Naive thymus-derived CD4-positive, alpha-beta T cell (primary cell): ENCODE measurements at regions of chr12 and their contacts with region 1.

Region 1: DNA sequence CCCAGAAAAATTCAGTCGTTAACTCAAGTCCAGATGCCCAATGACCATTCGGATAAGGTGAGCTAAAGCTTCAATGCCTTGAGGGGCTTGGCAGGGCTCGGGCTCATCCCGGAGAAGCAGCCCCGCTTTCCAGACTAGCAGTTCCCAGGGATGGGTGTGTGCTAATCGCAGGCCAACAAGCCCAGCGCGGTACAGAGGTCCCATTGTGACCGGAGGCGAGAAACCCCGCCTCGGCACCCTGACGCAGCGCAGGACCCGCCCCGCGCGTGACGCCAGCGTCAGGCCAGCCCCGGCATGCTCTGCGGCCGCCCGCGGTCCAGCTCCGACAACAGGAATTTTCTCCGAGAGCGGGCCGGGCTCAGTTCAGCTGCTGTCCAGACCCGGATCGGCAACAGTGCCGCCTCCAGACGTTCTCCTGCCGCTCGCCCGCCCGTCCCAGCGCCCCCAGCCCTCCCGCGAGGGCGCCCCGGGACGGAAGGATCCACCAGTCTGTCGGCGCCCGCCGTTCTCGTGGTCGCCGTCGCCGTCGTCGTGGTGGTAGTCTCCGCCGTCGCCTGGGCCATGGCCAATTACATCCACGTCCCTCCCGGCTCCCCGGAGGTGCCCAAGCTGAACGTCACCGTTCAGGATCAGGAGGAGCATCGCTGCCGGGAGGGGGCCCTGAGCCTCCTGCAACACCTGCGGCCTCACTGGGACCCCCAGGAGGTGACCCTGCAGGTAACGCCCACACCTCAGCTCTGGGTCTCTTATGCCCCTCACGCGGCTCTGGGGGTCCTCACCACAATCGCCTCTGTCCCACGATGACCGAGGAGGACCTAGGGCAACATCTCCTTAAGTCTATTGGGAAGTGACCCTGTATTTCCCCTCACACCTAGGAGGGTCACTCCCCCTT is at the start of gene ETNK1:
- DNase-seq: peak; percentile 72 to 88 (median 77)
- ATAC-seq: peak; percentile 99
- H3K4me3 ChIP-seq: peak within 1 kb of the TSS; percentile 80
- H3K4me3 Mint-ChIP-seq: peak within 1 kb of the TSS; percentile 85 to 100 (median 96)
- H3K27ac ChIP-seq: peak within 1 kb of the TSS; percentile 88
- H3K27ac Mint-ChIP-seq: peak within 1 kb of the TSS; percentile 84 to 99 (median 97)
- H3K4me1 ChIP-seq: peaks cover 17 to 20% of the 10 kb centered on the region in 2 donors
- H3K4me1 Mint-ChIP-seq: peaks cover 23 to 50% (median 45%) of the 10 kb centered on the region in 7 donors
- H3K27me3 ChIP-seq: no peaks in the 10 kb centered on the region
- H3K27me3 Mint-ChIP-seq: peaks cover 0 to 25% (median 9%) of the 10 kb centered on the region in 5 donors
- total RNA-seq, gene ETNK1: 43.7 to 88.6 (median 77.9) TPM

Region 2: DNA sequence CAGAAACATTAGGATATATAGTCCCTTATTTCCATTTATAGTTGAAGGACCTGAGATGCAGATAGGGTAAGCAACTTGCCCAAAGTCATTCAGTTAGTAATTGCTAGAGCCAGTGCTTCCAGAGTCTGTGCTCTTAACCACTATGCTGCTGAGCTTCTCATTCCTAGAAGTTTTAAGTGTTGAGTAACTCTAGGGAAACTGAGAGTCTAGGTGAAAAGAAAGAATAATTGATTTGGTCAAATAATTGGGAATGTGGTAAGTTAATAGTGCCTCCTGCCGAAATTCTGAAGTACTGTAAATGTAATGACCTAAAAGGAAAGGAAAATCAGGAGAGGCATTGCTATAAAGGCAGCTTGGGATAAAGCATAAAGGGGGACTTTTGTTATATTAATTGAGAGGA is 1173.6 kb before region 1 on chr12:
- CTCF ChIA-PET with region 1: no interaction called
- POLR2A ChIA-PET with region 1: no interaction called
- intact Hi-C with region 1: loop called in 1 of 2 experiments (anchors 5 kb)
- DNase-seq: no peak
- ATAC-seq: no peak
- H3K4me3 ChIP-seq: no peak overlapping the region
- H3K4me3 Mint-ChIP-seq: no peak overlapping the region
- H3K27ac ChIP-seq: no peak overlapping the region
- H3K27ac Mint-ChIP-seq: peak overlapping the region in 4 of 9 donors; percentile 6 to 51 (median 28)
- H3K4me1 ChIP-seq: peaks cover 2 to 21% of the 10 kb centered on the region in 2 donors
- H3K4me1 Mint-ChIP-seq: peaks cover 2 to 48% (median 29%) of the 10 kb centered on the region in 7 donors
- H3K27me3 ChIP-seq: no peaks in the 10 kb centered on the region
- H3K27me3 Mint-ChIP-seq: no peaks in the 10 kb centered on the region

Region 3: DNA sequence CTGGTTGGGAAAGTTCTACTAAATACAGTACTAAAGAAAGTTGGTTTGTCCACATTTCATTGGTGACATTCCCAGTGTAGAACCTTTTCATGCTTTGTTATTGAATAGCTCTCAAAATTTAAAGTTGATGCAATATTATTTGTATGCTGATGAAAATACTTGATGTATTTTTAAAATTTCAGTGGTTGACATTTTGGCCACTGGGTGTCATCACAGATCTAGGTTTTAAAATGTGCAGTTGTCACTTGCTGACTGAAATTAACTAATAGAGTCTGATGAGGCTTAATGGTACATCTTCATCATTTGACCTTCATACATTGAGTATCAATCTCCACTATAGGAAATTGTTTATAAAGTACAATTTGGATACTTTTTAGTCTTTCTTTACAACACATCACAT is 541.9 kb before region 1 on chr12:
- CTCF ChIA-PET with region 1: no interaction called
- POLR2A ChIA-PET with region 1: no interaction called
- intact Hi-C with region 1: loop called in 1 of 2 experiments (anchors 10 kb)
- DNase-seq: peak in 7 of 9 donors; percentile 18 to 57 (median 47)
- ATAC-seq: peak; percentile 56
- H3K4me3 ChIP-seq: no peak overlapping the region
- H3K4me3 Mint-ChIP-seq: no peak overlapping the region
- H3K27ac ChIP-seq: no peak overlapping the region
- H3K27ac Mint-ChIP-seq: no peak overlapping the region
- H3K4me1 ChIP-seq: no peaks in the 10 kb centered on the region
- H3K4me1 Mint-ChIP-seq: no peaks in the 10 kb centered on the region
- H3K27me3 ChIP-seq: no peaks in the 10 kb centered on the region
- H3K27me3 Mint-ChIP-seq: peaks cover 0 to 9% (median 0%) of the 10 kb centered on the region in 5 donors

Region 4: GRCh38 chr12:22312336-22312735 is 312.8 kb before region 1 on chr12:
- CTCF ChIA-PET with region 1: no interaction called
- POLR2A ChIA-PET with region 1: no interaction called
- intact Hi-C with region 1: no loop called
- DNase-seq: no peak
- ATAC-seq: no peak
- H3K4me3 ChIP-seq: no peak overlapping the region
- H3K4me3 Mint-ChIP-seq: no peak overlapping the region
- H3K27ac ChIP-seq: no peak overlapping the region
- H3K27ac Mint-ChIP-seq: no peak overlapping the region
- H3K4me1 ChIP-seq: no peaks in the 10 kb centered on the region
- H3K4me1 Mint-ChIP-seq: peaks cover 0 to 5% (median 0%) of the 10 kb centered on the region in 7 donors
- H3K27me3 ChIP-seq: no peaks in the 10 kb centered on the region
- H3K27me3 Mint-ChIP-seq: peaks cover 0 to 20% (median 4%) of the 10 kb centered on the region in 5 donors

Region 5: DNA sequence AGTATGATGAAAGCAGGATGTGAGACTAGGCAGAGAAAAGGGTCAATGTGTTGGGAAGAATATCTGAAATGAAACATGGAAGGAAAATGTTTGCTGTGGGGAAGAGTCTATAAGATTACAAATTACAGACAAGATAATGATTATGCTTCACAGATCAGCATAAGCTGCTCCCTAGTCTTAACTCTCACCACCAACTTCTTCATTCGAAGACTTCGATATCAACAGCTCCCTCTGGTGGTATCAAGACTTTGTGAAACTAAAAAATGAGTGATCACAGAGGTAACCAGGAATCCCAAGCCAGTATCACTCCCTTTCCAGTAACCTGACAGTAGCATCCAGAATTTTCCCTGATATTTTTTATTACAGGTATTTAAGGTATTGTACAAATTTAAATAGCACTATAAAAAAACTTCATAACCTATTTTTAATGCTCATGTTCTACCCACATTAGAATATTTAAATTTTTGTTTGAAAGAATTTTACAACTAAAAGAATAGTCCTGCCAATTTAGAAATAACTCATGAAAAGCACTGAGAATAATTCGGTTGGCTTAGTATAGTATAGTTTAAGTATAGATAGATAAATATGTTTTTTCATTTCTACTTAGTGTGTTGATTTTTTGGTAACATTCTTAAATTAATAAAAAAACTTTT is 165.2 kb before region 1 on chr12:
- CTCF ChIA-PET with region 1: interaction called, 4 read pairs
- POLR2A ChIA-PET with region 1: no interaction called
- intact Hi-C with region 1: loop called (anchors 2 to 5 kb)
- DNase-seq: peak in 6 of 9 donors; percentile 22 to 43 (median 34)
- ATAC-seq: peak; percentile 81
- H3K4me3 ChIP-seq: no peak overlapping the region
- H3K4me3 Mint-ChIP-seq: no peak overlapping the region
- H3K27ac ChIP-seq: no peak overlapping the region
- H3K27ac Mint-ChIP-seq: peak overlapping the region in 2 of 9 donors; percentile 4 to 30
- H3K4me1 ChIP-seq: no peaks in the 10 kb centered on the region
- H3K4me1 Mint-ChIP-seq: peaks cover 0 to 3% (median 0%) of the 10 kb centered on the region in 7 donors
- H3K27me3 ChIP-seq: no peaks in the 10 kb centered on the region
- H3K27me3 Mint-ChIP-seq: no peaks in the 10 kb centered on the region

Region 6: DNA sequence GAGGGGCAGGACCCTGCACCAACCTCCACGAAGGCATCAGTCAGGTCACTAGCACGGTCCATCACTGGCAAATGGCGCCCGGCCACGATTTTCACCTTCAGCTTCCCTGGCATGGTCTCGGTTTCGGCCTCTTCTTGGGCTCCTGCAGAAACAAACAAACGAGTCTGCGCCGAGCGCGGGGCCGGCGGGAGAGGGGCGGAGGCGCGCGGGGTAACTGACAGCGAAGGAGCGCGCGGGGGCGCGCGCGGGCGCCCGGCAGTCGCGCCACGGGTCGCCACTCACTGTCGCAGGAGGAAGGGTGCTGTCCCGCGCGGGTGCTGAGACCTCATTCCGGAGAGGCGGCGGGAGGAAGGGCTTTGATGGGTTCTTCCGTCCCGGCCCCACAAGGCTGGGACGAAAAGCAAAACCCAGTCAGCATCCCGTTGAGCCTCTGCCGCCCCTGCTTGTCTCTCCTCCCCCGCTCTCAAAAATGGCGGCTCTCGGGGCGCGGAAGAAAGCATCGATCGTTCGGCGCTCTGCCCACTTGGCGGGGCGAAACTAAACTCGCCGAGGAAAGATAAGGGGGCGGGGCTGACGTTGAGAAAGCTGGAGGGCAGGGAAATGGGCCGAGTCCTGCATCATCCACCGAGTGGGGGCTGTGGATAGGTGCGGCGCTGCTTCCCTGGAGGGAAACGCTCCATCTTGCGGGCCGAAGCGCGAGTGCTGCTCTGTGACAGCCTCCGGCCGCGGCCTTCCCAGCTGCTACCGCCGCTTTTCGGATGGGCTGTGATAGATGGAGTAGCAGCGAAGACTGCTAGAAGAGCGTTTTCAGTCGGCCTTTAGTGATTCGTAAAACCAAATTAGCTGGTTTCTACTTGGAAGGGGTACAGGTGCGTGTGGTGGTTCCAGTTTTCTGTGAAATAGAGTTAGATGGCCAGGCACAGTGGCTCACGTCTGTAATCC is 80.8 kb before region 1 on chr12 and contains the start of gene C2CD5:
- CTCF ChIA-PET with region 1: interaction called, 7 read pairs
- POLR2A ChIA-PET with region 1: interaction called, 26 read pairs
- intact Hi-C with region 1: loop called (anchors 1 kb)
- DNase-seq: peak; percentile 84 to 96 (median 96)
- ATAC-seq: peak; percentile 96
- H3K4me3 ChIP-seq: peak within 1 kb of the TSS; percentile 95
- H3K4me3 Mint-ChIP-seq: peak within 1 kb of the TSS; percentile 91 to 98 (median 92)
- H3K27ac ChIP-seq: peak within 1 kb of the TSS; percentile 79
- H3K27ac Mint-ChIP-seq: peak within 1 kb of the TSS; percentile 94 to 98 (median 95)
- H3K4me1 ChIP-seq: peaks cover 7 to 18% of the 10 kb centered on the region in 2 donors
- H3K4me1 Mint-ChIP-seq: peaks cover 32 to 47% (median 38%) of the 10 kb centered on the region in 7 donors
- H3K27me3 ChIP-seq: no peaks in the 10 kb centered on the region
- H3K27me3 Mint-ChIP-seq: peaks cover 0 to 12% (median 4%) of the 10 kb centered on the region in 5 donors
- total RNA-seq, gene C2CD5: 31.5 to 58.9 (median 47.1) TPM